Activated CD8-positive, alpha-beta T cell treated with anti-CD3 and anti-CD28 coated beads for 36 hours (primary cell): ENCODE measurements at regions of chrX and their contacts with region 1.

Region 1: GRCh38 chrX:124211312-124211942 is 121.0 kb upstream of the TEX13D start:
- DNase-seq: peak; percentile 24
- ATAC-seq: peak; percentile 58
- H3K4me3 Mint-ChIP-seq: peak overlapping the region; percentile 19
- H3K27ac Mint-ChIP-seq: no peak overlapping the region
- H3K4me1 Mint-ChIP-seq: peaks cover 45% of the 10 kb centered on the region
- H3K27me3 Mint-ChIP-seq: no peaks in the 10 kb centered on the region
- CTCF ChIP-seq: peak; percentile 45

Region 2: GRCh38 chrX:124194199-124194598 is 17.2 kb before region 1 on chrX:
- CTCF ChIA-PET with region 1: interaction called, 10 read pairs
- POLR2A ChIA-PET with region 1: no interaction called
- intact Hi-C with region 1: no loop called
- DNase-seq: no peak
- ATAC-seq: no peak
- H3K4me3 Mint-ChIP-seq: no peak overlapping the region
- H3K27ac Mint-ChIP-seq: no peak overlapping the region
- H3K4me1 Mint-ChIP-seq: no peaks in the 10 kb centered on the region
- H3K27me3 Mint-ChIP-seq: no peaks in the 10 kb centered on the region
- CTCF ChIP-seq: no peak